IMR-90 (cell line): ENCODE measurements at regions of chr4 and their contacts with region 1.

Region 1: DNA sequence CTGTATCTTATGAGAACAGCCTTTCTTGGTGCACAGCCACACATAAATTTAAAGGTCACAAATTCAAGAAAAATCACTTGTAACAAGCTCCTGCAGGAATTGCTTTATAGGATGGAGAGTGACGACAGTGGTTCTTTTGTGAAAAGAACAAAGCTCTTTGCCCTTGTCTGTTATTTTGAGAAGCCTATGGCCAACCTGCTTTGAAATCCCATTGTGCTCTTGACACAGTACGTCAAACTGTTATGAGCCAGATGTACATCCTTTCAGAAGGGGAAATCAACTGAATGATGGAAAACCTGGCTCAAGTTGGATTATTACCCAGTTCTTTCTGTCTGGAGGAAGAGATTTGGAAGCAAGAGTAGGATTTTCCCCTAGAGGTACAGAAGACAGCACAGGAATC is 1454.2 kb downstream of the ARAP2 start:
- DNase-seq: no peak
- ATAC-seq: no peak
- H3K4me3 ChIP-seq: no peak overlapping the region
- H3K27ac ChIP-seq: no peak overlapping the region
- H3K4me1 ChIP-seq: no peaks in the 10 kb centered on the region
- H3K27me3 ChIP-seq: no peaks in the 10 kb centered on the region
- CTCF ChIP-seq: no peak
- POLR2A ChIP-seq: no peak
- RAD21 ChIP-seq: no peak

Region 2: GRCh38 chr4:34814266-34814665 is 24.1 kb after region 1 on chr4:
- CTCF ChIA-PET with region 1: no interaction called
- POLR2A ChIA-PET with region 1: no interaction called
- dilution Hi-C with region 1: no loop called
- in situ Hi-C with region 1: no loop called
- intact Hi-C with region 1: loop called (anchors 1 kb)
- DNase-seq: no peak
- ATAC-seq: no peak
- H3K4me3 ChIP-seq: no peak overlapping the region
- H3K27ac ChIP-seq: no peak overlapping the region
- H3K4me1 ChIP-seq: no peaks in the 10 kb centered on the region
- H3K27me3 ChIP-seq: no peaks in the 10 kb centered on the region
- CTCF ChIP-seq: no peak
- POLR2A ChIP-seq: no peak
- RAD21 ChIP-seq: no peak

Region 3: DNA sequence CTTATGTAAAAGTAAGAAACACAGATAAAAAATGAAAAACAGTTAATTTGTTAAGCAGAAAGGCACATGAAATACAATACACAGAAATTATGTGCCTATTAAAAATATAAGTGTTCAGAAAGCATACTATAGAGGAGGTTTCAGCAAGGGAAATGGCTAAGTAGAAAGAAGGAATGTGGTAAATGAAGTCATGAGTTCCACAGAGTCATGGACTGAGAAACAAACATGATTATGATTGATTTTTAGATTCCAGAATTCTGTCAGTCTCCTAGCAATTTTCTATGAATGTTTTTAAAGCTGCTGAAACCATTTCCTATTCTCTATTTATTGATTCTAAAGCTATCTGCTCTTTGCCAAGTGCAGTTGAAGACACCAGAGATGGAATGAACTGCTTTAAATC is 55.8 kb after region 1 on chr4:
- CTCF ChIA-PET with region 1: no interaction called
- POLR2A ChIA-PET with region 1: no interaction called
- dilution Hi-C with region 1: no loop called
- in situ Hi-C with region 1: no loop called
- intact Hi-C with region 1: loop called (anchors 10 kb)
- DNase-seq: no peak
- ATAC-seq: no peak
- H3K4me3 ChIP-seq: no peak overlapping the region
- H3K27ac ChIP-seq: no peak overlapping the region
- H3K4me1 ChIP-seq: no peaks in the 10 kb centered on the region
- H3K27me3 ChIP-seq: no peaks in the 10 kb centered on the region
- CTCF ChIP-seq: no peak
- POLR2A ChIP-seq: no peak
- RAD21 ChIP-seq: no peak